ENCODE measurements at regions of chr16 and their contacts with region 1.

Region 1: DNA sequence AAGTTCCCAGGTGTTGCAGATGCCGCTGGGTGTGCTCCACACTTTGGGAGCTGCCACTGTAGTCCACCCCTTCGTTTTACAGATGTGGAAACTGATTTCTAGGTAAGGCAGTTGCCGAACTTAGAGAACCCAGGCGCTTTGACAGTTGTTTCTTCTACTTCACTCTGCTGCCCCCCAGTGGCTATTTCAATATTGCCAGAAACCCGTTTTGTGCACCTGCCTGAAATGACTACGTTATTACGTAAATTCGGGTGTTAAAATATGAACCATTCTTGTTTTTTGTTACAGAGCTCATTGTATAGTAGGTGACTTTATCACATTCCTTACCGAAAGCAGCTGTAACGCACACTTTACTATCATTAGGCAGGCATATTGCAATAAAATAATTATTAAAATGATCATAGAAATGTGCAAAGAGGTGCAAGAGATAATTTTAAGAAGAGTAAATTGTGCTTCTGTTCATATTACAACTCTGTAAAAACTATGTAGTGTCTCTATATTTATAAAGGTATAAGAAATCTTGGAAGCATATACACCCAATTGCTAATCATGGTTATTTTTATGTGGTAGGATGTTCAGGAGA is 44.9 kb downstream of the OTOA start:
- DNase-seq: peak; percentile 95
- H3K4me3 ChIP-seq: no peak overlapping the region
- H3K27ac ChIP-seq: no peak overlapping the region
- H3K4me1 ChIP-seq: peaks cover 0 to 8% (median 6%) of the 10 kb centered on the region in 4 donors
- H3K27me3 ChIP-seq: peaks cover 0 to 6% (median 0%) of the 10 kb centered on the region in 4 donors
- CTCF ChIP-seq: peak; percentile 71 to 84 (median 77)
- EP300 ChIP-seq: no peak
- POLR2A ChIP-seq: no peak

Region 2: DNA sequence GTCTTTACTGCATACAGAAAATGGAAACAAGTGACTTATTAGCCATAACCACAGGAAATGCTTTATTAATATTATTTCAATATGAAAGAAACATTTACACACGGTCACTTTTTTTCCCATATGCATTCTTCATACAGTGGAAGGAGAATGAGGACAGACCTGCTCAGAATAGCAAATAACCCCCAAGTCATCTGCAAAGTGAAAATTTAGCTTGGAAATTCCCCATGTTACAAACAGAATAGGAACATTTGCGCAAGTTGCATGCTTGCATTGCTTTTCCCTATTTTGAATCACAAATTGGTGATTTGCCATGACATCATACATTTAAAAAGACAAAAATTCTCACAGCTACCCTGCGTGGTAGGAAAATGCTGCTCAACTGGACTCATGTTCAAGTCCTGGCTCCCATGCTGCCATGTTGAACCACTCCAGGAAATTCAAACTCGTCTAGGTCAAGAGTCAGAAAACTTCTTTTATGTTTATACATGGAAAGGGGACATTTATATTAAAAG is 1483.3 kb before region 1 on chr16:
- intact Hi-C with region 1: no loop called
- DNase-seq: no peak
- H3K4me3 ChIP-seq: no peak overlapping the region
- H3K27ac ChIP-seq: no peak overlapping the region
- H3K4me1 ChIP-seq: no peaks in the 10 kb centered on the region
- H3K27me3 ChIP-seq: peaks cover 0 to 15% (median 0%) of the 10 kb centered on the region in 4 donors
- CTCF ChIP-seq: no peak
- EP300 ChIP-seq: no peak
- POLR2A ChIP-seq: no peak

Region 3: DNA sequence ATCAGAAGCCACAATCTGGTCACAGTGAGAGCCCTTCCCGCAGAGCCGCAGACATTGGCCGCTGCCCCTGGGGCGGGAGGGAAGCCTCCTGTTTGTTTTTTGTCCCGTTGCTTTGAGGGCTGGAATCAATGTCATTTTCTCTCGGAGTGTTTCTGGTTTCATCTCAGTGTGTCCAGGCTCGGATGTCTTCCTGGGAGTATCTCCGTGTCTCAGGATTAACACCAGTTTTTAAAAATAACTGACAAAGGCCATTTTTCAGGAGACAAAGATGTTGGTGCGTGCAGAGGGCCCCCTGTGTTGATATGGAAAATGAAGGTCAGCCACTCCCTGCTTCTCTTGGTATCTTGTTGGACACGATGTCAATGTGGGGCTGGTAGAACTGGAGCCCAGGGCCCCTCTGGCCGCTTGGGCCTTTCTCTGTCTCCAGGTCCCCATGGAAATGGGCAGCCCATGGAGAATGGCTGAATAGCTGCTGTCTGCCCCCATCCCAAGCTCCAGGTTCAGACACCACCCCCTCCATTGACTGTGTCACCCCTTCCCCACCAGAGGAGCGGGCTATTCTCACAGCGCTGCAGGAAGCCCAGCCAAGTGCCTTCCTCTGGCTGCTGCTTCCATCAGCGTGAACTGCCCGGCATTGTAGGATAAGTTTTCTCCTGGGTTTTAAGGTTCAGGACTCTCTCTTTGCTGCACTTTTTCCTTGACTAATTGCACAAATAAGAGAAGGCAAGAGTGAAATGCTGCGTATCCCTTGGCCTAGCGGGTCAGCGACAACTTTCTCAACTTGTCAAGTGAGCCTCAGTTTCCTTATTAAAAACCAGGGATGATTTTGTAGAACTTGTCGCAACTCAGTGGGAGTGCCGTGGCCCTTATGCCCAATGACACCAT is 181.5 kb before region 1 on chr16:
- intact Hi-C with region 1: no loop called
- DNase-seq: no peak
- H3K4me3 ChIP-seq: no peak overlapping the region
- H3K27ac ChIP-seq: no peak overlapping the region
- H3K4me1 ChIP-seq: no peaks in the 10 kb centered on the region
- H3K27me3 ChIP-seq: no peaks in the 10 kb centered on the region
- CTCF ChIP-seq: no peak
- EP300 ChIP-seq: no peak
- POLR2A ChIP-seq: no peak

Region 4: DNA sequence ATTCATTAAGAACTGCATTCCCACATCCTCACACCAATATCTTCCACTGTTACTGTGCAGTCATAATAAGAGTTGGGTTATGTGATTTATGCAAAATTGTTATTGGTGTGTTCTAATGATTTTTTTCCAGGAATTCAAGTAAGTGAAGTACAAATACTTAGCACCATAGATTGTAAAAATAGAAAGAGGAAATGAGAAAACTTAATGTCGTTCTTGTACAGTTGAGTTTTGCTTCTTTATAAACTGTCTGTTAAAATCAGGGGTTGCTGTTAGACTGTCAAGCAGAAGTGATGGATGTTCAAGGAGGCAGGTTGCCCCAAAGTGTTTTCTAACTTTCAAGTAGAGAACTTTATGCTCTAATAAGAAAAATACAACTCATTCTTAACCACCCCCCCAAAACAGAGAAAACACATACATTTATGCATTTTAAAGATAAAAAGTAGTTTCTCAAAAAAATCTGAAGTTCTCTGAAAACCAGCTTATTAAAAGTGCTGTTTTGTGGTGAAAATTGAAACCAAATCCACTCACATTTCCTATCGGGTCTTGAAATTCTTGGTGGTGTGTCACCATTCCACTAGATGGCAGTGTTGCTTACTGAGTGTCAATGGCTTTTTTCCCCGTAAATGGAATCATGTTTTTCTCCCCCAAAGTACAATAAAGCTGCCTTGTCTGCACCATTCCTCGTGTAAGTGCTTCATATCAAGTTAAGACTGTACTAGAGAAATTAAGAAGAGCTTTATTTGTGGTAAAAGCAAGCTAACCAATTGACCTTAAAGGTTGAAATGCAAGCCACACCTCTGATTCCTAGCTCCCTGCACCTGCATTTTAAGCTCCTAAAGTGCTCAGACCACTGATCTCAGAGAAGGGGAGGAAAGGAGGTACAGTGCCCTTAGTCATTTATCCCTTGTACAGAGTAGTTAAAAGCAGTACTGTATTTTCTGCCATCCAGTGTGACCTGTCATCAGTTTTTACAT is 51.5 kb before region 1 on chr16:
- intact Hi-C with region 1: loop called (anchors 2 kb)
- DNase-seq: no peak
- H3K4me3 ChIP-seq: no peak overlapping the region
- H3K27ac ChIP-seq: no peak overlapping the region
- H3K4me1 ChIP-seq: peaks cover 0 to 15% (median 8%) of the 10 kb centered on the region in 4 donors
- H3K27me3 ChIP-seq: no peaks in the 10 kb centered on the region
- CTCF ChIP-seq: peak; percentile 51 to 87 (median 76)
- EP300 ChIP-seq: no peak
- POLR2A ChIP-seq: no peak

Region 5: DNA sequence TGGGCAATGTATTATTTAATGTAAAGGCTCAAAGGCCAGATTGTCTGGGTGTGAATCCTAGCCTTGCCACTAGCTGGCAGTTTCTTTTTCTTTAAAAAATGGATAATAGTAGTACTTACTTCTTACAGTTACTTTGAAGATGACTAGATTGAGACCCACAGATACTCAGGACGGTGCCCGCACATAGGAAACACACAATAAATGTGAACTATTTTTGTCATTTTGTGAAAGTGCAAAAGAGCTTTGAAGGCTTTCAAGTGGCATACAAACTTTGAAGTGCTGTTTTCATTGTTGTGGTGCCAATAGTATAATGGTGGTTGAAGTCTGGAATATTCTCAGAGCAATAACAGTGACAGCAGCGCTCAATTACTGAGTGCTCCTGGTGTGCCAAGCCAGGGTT is 18.7 kb after region 1 on chr16:
- intact Hi-C with region 1: no loop called
- DNase-seq: no peak
- H3K4me3 ChIP-seq: no peak overlapping the region
- H3K27ac ChIP-seq: no peak overlapping the region
- H3K4me1 ChIP-seq: no peaks in the 10 kb centered on the region
- H3K27me3 ChIP-seq: peaks cover 0 to 15% (median 0%) of the 10 kb centered on the region in 4 donors
- CTCF ChIP-seq: no peak
- EP300 ChIP-seq: no peak
- POLR2A ChIP-seq: no peak